ENCODE measurements at regions of chr16 and their contacts with region 1.

Region 1: DNA sequence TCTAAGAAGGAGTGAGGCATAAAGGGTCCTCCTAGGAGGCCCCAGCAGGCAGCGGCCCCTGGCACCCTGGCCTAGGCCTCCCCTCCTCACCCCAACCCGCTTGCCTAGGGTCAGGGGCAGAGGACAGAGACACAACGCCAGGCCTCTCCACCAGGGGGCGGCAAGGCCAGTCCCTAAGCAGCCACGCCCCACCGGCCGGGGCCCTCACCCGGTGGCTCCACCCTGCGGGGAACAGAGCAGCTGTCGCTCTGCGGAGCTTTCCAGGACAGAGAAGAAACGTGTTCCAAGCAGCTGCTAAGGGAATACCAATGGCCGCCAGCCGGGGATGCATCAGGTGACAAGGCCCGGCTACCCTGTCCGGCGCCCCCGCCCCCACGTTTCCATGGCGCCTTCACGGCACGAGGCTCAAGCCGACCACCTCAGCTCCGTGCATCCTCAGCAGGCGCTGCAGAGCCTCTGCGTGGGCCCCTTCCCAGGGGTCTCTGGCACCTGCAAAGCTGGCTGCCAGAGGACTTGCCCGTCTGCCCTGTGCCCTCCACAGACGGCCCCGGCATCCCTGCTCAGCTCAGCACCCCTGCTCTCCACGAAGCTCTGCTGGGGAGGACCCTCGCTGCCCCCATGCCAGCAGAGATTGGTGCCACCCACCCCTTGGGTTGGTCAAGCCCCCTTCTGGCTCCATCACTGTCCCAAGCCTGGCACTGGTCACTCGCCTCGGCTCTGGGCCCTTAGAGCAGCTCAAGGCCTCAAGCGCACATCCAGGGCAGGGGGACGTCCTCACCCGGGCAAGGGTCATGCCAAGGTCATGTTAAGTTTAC is 5.6 kb downstream of the ZNF598 start:
- DNase-seq: peak; percentile 73
- H3K4me3 ChIP-seq: no peak overlapping the region
- H3K27ac ChIP-seq: no peak overlapping the region
- H3K4me1 ChIP-seq: peaks cover 42% of the 10 kb centered on the region
- H3K27me3 ChIP-seq: no peaks in the 10 kb centered on the region
- CTCF ChIP-seq: peak; percentile 97 to 99
- POLR2A ChIP-seq: no peak

Region 2: DNA sequence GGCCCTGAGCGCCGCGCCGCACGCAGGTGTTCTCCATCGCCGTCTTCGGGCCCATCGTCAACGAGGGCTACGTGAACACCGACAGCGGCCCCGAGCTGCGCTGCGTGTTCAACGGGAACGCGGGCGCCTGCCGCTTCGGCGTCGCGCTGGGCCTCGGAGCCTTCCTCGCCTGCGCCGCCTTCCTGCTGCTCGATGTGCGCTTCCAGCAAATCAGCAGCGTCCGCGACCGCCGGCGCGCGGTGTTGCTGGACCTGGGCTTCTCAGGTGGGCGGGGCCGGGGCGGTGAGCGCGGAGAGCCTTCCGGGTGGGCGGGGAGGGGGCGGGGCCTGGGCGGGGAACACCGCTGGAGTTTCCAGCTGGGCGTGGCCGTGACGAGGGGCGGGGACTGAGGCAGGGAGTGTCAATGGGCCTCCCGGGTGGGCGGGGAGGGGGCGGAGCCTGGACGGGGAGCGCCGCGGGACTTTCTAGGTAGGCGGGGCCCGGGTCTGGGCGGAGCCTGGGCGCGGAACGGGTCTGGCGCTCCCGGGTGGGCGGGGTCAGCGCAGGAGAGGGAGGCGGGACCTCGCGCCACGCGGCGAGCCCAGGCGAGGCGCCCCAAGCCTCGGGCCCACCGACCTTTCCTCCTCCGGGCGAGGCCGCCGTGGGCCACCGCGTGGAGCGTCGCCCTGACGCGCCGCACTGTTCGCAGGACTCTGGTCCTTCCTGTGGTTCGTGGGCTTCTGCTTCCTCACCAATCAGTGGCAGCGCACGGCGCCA is 11.9 kb before region 1 on chr16:
- CTCF ChIA-PET with region 1: interaction called, 23 read pairs
- POLR2A ChIA-PET with region 1: interaction called, 4 read pairs
- dilution Hi-C with region 1: no loop called
- intact Hi-C with region 1: no loop called
- DNase-seq: peak; percentile 88
- H3K4me3 ChIP-seq: peak overlapping the region in 1 of 3 experiments; percentile 15
- H3K27ac ChIP-seq: no peak overlapping the region
- H3K4me1 ChIP-seq: peaks cover 7% of the 10 kb centered on the region
- H3K27me3 ChIP-seq: peaks cover 23 to 24% of the 10 kb centered on the region in 2 experiments
- CTCF ChIP-seq: no peak
- POLR2A ChIP-seq: peak; percentile 21

Region 3: DNA sequence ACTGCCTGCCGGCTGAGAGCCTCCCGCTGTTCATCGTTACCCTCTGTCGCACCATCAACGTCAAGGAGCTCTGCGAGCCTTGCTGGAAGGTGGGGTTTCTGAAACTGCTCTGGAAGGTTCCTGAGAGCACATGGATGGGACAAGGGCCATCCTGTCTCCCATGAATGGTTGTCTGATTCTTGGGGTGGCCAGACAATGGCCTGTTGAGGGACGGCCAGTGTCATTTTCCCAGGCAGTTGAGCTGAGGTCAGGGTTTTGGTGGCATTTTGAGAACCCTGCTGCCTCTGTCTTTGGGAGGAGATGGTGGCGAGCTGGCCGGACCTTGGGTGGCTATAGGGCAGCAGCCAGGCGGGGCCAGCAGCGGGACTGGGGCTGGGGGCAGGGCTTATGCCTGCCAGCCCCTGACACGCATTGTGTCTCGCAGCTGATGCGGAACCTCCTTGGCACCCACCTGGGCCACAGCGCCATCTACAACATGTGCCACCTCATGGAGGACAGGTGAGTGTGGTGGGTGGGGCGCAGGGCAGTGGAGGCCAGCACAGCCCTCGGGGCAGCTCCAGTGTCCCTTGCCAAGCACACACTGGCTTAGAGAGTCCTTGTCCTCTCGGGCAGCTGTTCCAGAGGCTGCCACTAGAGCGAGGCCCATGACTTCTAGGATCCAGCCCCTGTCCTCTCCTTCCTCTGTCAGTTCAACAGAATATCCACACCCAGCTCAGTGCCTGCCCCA is 52.8 kb after region 1 on chr16:
- CTCF ChIA-PET with region 1: interaction called, 12 read pairs
- POLR2A ChIA-PET with region 1: no interaction called
- dilution Hi-C with region 1: no loop called
- intact Hi-C with region 1: no loop called
- DNase-seq: no peak
- H3K4me3 ChIP-seq: no peak overlapping the region
- H3K27ac ChIP-seq: no peak overlapping the region
- H3K4me1 ChIP-seq: no peaks in the 10 kb centered on the region
- H3K27me3 ChIP-seq: no peaks in the 10 kb centered on the region
- CTCF ChIP-seq: no peak
- POLR2A ChIP-seq: no peak

Region 4: GRCh38 chr16:2147981-2148671 is 144.1 kb after region 1 on chr16 and contains the start of gene RAB26:
- CTCF ChIA-PET with region 1: interaction called, 14 read pairs
- POLR2A ChIA-PET with region 1: interaction called, 3 read pairs
- dilution Hi-C with region 1: no loop called
- intact Hi-C with region 1: loop called (anchors 1 kb)
- DNase-seq: peak; percentile 46
- H3K4me3 ChIP-seq: peak within 1 kb of the TSS; percentile 10 to 32 (median 13)
- H3K27ac ChIP-seq: no peak within 1 kb of the TSS
- H3K4me1 ChIP-seq: peaks cover 23% of the 10 kb centered on the region
- H3K27me3 ChIP-seq: no peaks in the 10 kb centered on the region
- CTCF ChIP-seq: no peak
- POLR2A ChIP-seq: no peak
- total RNA-seq, gene RAB26: 0.91 and 1.6 TPM in 2 replicates